Posterior cingulate gyrus (tissue), 11 donors: ENCODE measurements at regions of chr2 and their contacts with region 1.

Region 1: GRCh38 chr2:43219383-43220228 is 6.8 kb downstream of the ZFP36L2 start:
- DNase-seq: peak; percentile 49 to 95 (median 68)

Region 2: GRCh38 chr2:43100883-43101662 is 118.5 kb before region 1 on chr2:
- intact Hi-C with region 1: loop called (anchors 1 kb)
- DNase-seq: peak; percentile 86 to 99 (median 92)

Region 3: GRCh38 chr2:43169987-43170386 is 49.6 kb before region 1 on chr2:
- intact Hi-C with region 1: loop called (anchors 10 kb)
- DNase-seq: peak in 1 of 10 donors; percentile 9